Sciatic nerve (tissue), 2 donors: ENCODE measurements at regions of chr7 and their contacts with region 1.

Region 1: DNA sequence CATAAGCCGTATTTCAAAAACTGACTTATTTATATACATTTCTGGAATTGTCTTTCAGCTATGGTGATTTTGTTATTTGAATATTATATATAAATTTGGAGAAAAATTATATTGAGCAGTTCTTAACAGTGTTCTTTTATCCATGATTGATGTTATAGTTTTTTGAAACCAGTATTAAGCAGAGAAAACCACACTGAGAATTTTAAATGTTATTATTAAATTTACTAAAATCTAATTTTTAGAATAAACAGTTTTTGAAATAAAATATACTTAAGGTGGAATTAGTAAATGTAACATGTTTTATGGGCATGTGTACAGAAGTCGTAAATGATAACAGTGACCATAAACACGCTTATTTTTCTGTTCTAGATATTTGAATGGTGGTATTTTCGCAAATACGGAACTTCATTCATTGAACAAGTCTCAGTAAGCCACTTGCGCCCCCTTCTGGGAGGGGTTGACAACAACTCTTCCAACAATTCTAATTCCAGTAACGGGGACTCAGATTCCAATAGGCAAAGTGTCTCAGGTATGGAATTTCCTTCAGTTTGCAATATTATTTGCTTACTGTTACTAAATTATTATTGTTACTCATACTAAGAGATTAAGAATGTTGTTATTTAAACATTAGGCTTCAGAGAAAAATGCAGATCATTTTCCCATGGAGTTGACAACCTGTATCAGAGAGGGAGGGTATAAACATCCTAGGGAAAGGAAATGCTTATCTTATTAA is 166.1 kb downstream of the ST7 start:
- DNase-seq: peak; percentile 91
- ATAC-seq: no peak

Region 2: DNA sequence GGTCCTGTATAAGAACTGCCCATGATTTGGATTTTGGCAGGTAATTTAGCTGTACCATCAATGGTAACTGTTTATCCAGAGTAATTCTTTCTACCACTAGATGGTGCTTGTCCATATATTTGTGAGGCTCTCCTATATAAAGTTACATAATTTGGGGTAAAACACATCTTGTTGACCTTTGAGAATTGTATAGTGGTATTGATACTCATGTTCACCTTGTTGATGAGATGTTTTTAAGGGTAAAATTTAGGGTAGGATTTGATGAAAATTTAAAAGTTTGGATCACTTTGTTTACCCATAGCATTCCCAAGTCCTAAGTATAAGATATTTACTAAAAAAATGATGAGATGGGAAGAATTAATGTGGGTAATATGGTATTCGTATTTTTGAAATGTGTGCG is 134.4 kb before region 1 on chr7:
- intact Hi-C with region 1: loop called (anchors 10 kb)
- DNase-seq: no peak
- ATAC-seq: peak; percentile 44

Region 3: GRCh38 chr7:117047496-117047895 is 71.9 kb before region 1 on chr7:
- intact Hi-C with region 1: no loop called
- DNase-seq: no peak
- ATAC-seq: no peak

Region 4: DNA sequence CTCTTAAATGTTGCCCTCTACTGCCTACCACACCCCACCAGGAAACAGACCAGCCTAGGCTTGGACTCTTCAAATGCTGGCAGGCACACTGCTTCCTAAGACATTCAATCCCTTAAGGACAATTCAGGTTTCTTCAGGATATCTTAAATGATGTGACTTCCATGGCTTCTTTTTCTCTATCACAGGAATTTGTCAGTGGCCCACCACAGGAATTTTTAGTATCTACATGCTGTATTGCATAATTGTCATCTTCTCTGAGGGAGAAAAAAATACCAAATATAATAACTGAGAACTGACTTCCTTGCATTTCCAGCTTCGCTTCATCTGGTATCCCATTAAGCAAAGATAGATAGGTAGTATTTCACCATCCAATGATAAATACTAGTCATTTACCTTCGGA is 74.2 kb after region 1 on chr7:
- intact Hi-C with region 1: no loop called
- DNase-seq: no peak
- ATAC-seq: no peak